Transverse colon (tissue), 4 donors: ENCODE measurements at regions of chr16 and their contacts with region 1.

Region 1: DNA sequence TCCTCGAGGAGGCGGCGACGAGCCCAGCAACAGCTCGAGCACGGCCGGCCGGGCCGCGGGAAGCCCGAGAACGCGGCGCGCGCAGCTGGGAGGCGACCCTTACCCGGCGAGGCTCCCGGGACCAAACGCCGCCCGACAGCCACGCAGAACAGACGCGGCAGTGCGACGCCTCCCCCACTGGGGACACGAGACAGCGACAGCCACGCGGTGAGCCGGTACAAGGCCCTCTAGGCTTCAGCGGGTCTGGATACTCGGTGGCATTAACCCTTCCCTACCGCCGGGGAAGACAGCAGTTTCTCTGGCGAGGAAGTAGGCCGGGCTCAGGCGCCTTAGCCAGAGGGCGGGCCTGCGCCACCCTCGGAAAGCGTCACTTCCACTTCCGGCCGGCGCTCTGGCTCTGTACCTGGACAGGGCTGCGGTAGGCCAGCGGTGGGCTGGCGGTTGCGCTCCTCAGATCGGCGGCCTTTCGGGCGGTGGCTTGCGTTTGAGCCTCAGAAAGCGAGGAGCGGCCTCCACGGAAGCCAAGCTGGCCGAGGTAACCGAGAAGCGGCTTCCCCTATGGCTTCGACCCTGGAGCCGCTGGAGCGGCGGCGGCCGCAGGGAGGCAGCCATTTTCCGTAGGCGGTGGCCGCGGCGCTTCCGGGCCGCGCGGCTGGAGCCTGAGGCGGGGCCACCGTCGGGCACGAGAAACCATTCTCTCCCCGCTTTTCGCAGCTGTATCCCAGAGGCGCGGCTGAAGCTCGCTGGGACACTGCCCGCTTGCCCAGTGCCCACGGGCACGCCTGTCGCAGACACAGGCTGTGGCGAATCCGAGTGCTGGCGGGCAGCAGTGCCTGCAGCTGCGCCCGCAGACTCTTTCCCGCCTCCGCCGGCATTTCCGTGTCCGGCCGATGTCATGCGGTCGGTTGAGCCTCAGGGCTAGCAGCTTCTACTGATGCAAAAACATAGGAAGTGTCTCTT is at the starts of genes TIGD7 and ZNF75A:
- DNase-seq: peak; percentile 87
- H3K4me3 ChIP-seq: peak within 1 kb of the TSS; percentile 30 to 81 (median 58)
- H3K27ac ChIP-seq: peak within 1 kb of the TSS; percentile 82 to 93 (median 86)
- H3K4me1 ChIP-seq: peaks cover 0 to 25% (median 3%) of the 10 kb centered on the region in 4 donors
- H3K27me3 ChIP-seq: no peaks in the 10 kb centered on the region
- CTCF ChIP-seq: peak in 2 of 5 experiments; percentile 34 to 38
- EP300 ChIP-seq: no peak
- POLR2A ChIP-seq: peak; percentile 89
- total RNA-seq, gene TIGD7: 0.20 to 4.3 (median 2.5) TPM in 3 of 4 donors, not detected in the other
- total RNA-seq, gene ZNF75A: 12.3 to 53.9 (median 25.5) TPM

Region 2: DNA sequence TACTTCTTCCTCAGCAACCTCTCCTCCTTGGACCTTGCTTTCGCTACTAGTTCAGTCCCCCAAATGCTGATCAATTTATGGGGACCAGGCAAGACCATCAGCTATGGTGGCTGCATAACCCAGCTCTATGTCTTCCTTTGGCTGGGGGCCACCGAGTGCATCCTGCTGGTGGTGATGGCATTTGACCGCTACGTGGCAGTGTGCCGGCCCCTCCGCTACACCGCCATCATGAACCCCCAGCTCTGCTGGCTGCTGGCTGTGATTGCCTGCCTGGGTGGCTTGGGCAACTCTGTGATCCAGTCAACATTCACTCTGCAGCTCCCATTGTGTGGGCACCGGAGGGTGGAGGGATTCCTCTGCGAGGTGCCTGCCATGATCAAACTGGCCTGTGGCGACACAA is 50.7 kb after region 1 on chr16:
- in situ Hi-C with region 1: no loop called
- intact Hi-C with region 1: loop called (anchors 2 kb)
- DNase-seq: no peak
- H3K4me3 ChIP-seq: no peak overlapping the region
- H3K27ac ChIP-seq: no peak overlapping the region
- H3K4me1 ChIP-seq: no peaks in the 10 kb centered on the region
- H3K27me3 ChIP-seq: peaks cover 6% of the 10 kb centered on the region
- CTCF ChIP-seq: no peak
- EP300 ChIP-seq: no peak
- POLR2A ChIP-seq: no peak

Region 3: GRCh38 chr16:3457434-3458252 is 152.3 kb after region 1 on chr16:
- in situ Hi-C with region 1: no loop called
- intact Hi-C with region 1: no loop called
- DNase-seq: peak; percentile 90
- H3K4me3 ChIP-seq: peak overlapping the region; percentile 76 to 95 (median 82)
- H3K27ac ChIP-seq: peak overlapping the region; percentile 94 to 99 (median 96)
- H3K4me1 ChIP-seq: peaks cover 30 to 61% (median 43%) of the 10 kb centered on the region in 4 donors
- H3K27me3 ChIP-seq: no peaks in the 10 kb centered on the region
- CTCF ChIP-seq: peak in 4 of 5 experiments; percentile 25 to 59 (median 46)
- EP300 ChIP-seq: no peak
- POLR2A ChIP-seq: peak; percentile 72